PC-9 (cell line): ENCODE measurements at regions of chr16 and their contacts with region 1.

Region 1: DNA sequence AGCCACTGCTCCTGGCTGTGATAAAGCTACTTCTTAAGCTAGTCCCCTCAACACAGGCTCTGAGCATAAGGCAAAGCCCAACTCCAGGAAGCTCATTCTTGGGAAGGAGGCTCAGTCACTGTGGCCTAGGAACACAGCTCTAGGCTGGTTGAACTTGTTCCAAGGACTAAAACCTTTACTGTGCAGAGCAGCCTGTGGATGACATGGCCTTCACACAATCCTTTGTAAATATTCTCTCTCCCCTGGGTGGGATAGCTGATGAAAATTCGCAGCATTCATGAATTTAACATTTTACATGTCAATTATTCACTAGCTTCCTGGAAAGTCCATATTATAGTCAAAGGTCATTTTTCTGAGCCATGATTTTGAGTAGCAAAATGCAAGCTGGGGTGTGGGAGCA is 28.9 kb downstream of the BEAN1 start:
- DNase-seq: no peak
- H3K4me3 ChIP-seq: no peak overlapping the region
- H3K27ac ChIP-seq: no peak overlapping the region
- H3K4me1 ChIP-seq: peaks cover 3% of the 10 kb centered on the region; the same call in 1 of the 2 replicates
- H3K27me3 ChIP-seq: no peaks in the 10 kb centered on the region
- CTCF ChIP-seq: no peak

Region 2: GRCh38 chr16:66502020-66502913 is 46.3 kb after region 1 on chr16:
- CTCF ChIA-PET with region 1: no interaction called
- POLR2A ChIA-PET with region 1: interaction called, 14 read pairs
- intact Hi-C with region 1: no loop called
- DNase-seq: peak in 1 of 2 experiments; percentile 72
- H3K4me3 ChIP-seq: no peak overlapping the region
- H3K27ac ChIP-seq: peak overlapping the region; percentile 42
- H3K4me1 ChIP-seq: peaks cover 37% of the 10 kb centered on the region
- H3K27me3 ChIP-seq: no peaks in the 10 kb centered on the region
- CTCF ChIP-seq: no peak